Naive thymus-derived CD4-positive, alpha-beta T cell (primary cell): ENCODE measurements at regions of chr11 and their contacts with region 1.

Region 1: GRCh38 chr11:57657194-57658022 is at the start of gene CLP1:
- DNase-seq: peak; percentile 87 to 99 (median 98)
- ATAC-seq: peak; percentile 99
- H3K4me3 ChIP-seq: peak within 1 kb of the TSS; percentile 64
- H3K4me3 Mint-ChIP-seq: peak within 1 kb of the TSS; percentile 89 to 100 (median 94)
- H3K27ac ChIP-seq: peak within 1 kb of the TSS; percentile 92
- H3K27ac Mint-ChIP-seq: peak within 1 kb of the TSS; percentile 88 to 98 (median 94)
- H3K4me1 ChIP-seq: peaks cover 4 to 10% of the 10 kb centered on the region in 2 donors
- H3K4me1 Mint-ChIP-seq: peaks cover 8 to 45% (median 36%) of the 10 kb centered on the region in 7 donors
- H3K27me3 ChIP-seq: no peaks in the 10 kb centered on the region
- H3K27me3 Mint-ChIP-seq: no peaks in the 10 kb centered on the region
- total RNA-seq, gene CLP1: 12.8 to 18.5 (median 14.7) TPM

Region 2: GRCh38 chr11:57324886-57325734 is 332.3 kb before region 1 on chr11 and contains the start of gene TNKS1BP1:
- CTCF ChIA-PET with region 1: no interaction called
- POLR2A ChIA-PET with region 1: no interaction called
- intact Hi-C with region 1: loop called in 1 of 2 experiments (anchors 1 kb)
- DNase-seq: peak; percentile 84 to 92 (median 90)
- ATAC-seq: peak; percentile 91
- H3K4me3 ChIP-seq: peak within 1 kb of the TSS; percentile 73
- H3K4me3 Mint-ChIP-seq: peak within 1 kb of the TSS; percentile 88 to 95 (median 91)
- H3K27ac ChIP-seq: peak within 1 kb of the TSS; percentile 79
- H3K27ac Mint-ChIP-seq: peak within 1 kb of the TSS; percentile 93 to 98 (median 95)
- H3K4me1 ChIP-seq: peaks cover 8 to 14% of the 10 kb centered on the region in 2 donors
- H3K4me1 Mint-ChIP-seq: peaks cover 30 to 58% (median 51%) of the 10 kb centered on the region in 7 donors
- H3K27me3 ChIP-seq: no peaks in the 10 kb centered on the region
- H3K27me3 Mint-ChIP-seq: no peaks in the 10 kb centered on the region
- total RNA-seq, gene TNKS1BP1: 11.2 to 22.0 (median 15.9) TPM

Region 3: DNA sequence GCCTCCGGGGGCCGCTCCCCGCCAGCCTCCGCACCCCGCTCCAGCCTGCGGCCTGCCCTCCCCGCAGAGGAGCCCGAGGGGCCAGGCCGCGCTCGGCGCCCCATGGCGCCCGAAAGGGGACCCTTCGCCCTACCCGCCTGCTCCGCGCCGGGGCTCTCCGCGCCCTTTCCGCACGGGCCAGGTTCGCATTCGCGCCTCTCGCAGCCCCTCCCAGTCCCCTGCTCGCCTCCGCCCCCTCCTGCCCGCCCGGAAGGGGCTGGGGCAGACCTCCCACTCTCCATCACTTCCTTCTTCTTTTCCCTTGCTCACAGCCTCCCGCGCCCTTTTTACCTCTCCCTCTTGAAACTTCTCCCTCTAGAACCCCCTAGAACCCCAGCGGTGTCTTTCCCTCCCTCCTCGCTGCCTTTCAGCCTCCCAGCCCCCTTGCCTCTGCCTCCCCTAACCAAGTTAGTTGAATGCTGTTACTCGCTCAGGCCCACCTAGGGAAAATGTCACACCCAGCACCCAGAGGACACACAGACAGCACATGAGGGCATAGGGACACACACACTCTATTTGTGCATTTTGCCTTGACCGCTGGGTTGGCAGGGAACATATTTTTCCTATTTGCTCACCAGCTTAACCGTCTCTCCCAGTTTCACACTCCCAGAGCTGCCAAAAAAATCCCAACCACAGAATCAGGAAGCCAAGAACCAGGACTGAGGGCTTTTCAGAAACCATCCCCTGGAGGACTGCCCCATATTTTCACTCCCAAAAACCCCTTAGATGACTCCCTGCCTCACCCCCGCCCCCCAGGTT is 230.3 kb before region 1 on chr11 and contains the start of gene SLC43A3:
- CTCF ChIA-PET with region 1: no interaction called
- POLR2A ChIA-PET with region 1: no interaction called
- intact Hi-C with region 1: loop called in 1 of 2 experiments (anchors 5 kb)
- DNase-seq: peak; percentile 18 to 79 (median 38)
- ATAC-seq: peak; percentile 63
- H3K4me3 ChIP-seq: peak within 1 kb of the TSS; percentile 56
- H3K4me3 Mint-ChIP-seq: peak within 1 kb of the TSS; percentile 83 to 92 (median 89)
- H3K27ac ChIP-seq: peak within 1 kb of the TSS; percentile 62
- H3K27ac Mint-ChIP-seq: peak within 1 kb of the TSS; percentile 52 to 93 (median 82)
- H3K4me1 ChIP-seq: peaks cover 24 to 36% of the 10 kb centered on the region in 2 donors
- H3K4me1 Mint-ChIP-seq: peaks cover 40 to 55% (median 50%) of the 10 kb centered on the region in 7 donors
- H3K27me3 ChIP-seq: no peaks in the 10 kb centered on the region
- H3K27me3 Mint-ChIP-seq: peaks cover 0 to 24% (median 0%) of the 10 kb centered on the region in 5 donors
- total RNA-seq, gene SLC43A3: 10.5 to 67.9 (median 12.2) TPM

Region 4: GRCh38 chr11:57463671-57464538 is 193.5 kb before region 1 on chr11:
- CTCF ChIA-PET with region 1: no interaction called
- POLR2A ChIA-PET with region 1: no interaction called
- intact Hi-C with region 1: no loop called
- DNase-seq: no peak
- ATAC-seq: no peak
- H3K4me3 ChIP-seq: no peak overlapping the region
- H3K4me3 Mint-ChIP-seq: no peak overlapping the region
- H3K27ac ChIP-seq: no peak overlapping the region
- H3K27ac Mint-ChIP-seq: peak overlapping the region in 1 of 9 donors; percentile 36
- H3K4me1 ChIP-seq: peaks cover 12 to 13% of the 10 kb centered on the region in 2 donors
- H3K4me1 Mint-ChIP-seq: peaks cover 8 to 22% (median 17%) of the 10 kb centered on the region in 7 donors
- H3K27me3 ChIP-seq: peaks cover 7 to 8% of the 10 kb centered on the region in 2 donors
- H3K27me3 Mint-ChIP-seq: peaks cover 11 to 48% (median 16%) of the 10 kb centered on the region in 5 donors

Region 5: GRCh38 chr11:57630193-57630592 is 27.2 kb before region 1 on chr11:
- CTCF ChIA-PET with region 1: no interaction called
- POLR2A ChIA-PET with region 1: no interaction called
- intact Hi-C with region 1: no loop called
- DNase-seq: no peak
- ATAC-seq: no peak
- H3K4me3 ChIP-seq: no peak overlapping the region
- H3K4me3 Mint-ChIP-seq: no peak overlapping the region
- H3K27ac ChIP-seq: no peak overlapping the region
- H3K27ac Mint-ChIP-seq: no peak overlapping the region
- H3K4me1 ChIP-seq: no peaks in the 10 kb centered on the region
- H3K4me1 Mint-ChIP-seq: no peaks in the 10 kb centered on the region
- H3K27me3 ChIP-seq: no peaks in the 10 kb centered on the region
- H3K27me3 Mint-ChIP-seq: peaks cover 9 to 36% (median 24%) of the 10 kb centered on the region in 5 donors

Region 6: DNA sequence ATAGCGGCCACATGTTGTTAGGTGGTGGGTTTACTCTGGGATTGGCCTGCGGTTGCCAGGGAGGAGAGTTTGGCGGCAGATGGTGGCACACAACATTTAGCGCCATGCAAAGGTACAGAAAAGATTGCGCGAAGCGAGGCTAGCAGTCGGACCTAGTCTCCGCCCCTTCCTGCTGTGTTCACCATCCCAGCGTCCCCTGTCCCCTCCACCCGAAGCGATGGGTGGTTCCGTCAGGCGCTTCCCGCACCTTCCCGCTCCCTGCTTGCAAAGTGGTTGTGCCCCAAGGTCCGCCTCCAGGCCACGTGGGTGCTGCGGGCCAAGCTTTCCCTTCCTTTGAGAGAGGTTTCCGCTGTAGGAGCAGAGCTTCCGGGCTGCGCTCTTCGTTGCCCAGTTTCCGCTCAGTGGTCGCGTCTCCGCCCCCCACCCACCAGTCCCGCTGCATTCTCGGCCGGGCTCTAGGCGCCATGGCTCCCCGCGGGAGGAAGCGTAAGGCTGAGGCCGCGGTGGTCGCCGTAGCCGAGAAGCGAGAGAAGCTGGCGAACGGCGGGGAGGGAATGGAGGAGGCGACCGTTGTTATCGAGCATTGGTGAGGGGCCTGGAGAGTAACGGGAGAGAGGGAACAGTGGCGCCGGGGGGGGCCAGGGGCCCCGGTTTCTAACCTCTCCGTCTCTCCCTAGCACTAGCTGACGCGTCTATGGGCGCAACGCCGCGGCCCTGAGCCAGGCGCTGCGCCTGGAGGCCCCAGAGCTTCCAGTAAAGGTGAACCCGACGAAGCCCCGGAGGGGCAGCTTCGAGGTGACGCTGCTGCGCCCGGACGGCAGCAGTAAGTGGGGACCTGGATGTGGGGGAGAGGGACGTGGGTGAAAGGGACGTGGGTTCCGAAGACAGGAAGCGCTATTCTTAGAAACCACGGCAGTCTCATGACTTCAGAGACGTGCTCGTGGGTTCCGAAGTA is 84.0 kb after region 1 on chr11 and contains the start of gene SELENOH:
- CTCF ChIA-PET with region 1: no interaction called
- POLR2A ChIA-PET with region 1: interaction called, 3 read pairs
- intact Hi-C with region 1: loop called (anchors 1 kb)
- DNase-seq: peak; percentile 75 to 96 (median 91)
- ATAC-seq: peak; percentile 94
- H3K4me3 ChIP-seq: peak within 1 kb of the TSS; percentile 86
- H3K4me3 Mint-ChIP-seq: peak within 1 kb of the TSS; percentile 90 to 100 (median 99)
- H3K27ac ChIP-seq: peak within 1 kb of the TSS; percentile 93
- H3K27ac Mint-ChIP-seq: peak within 1 kb of the TSS; percentile 97 to 100 (median 98)
- H3K4me1 ChIP-seq: peaks cover 16 to 23% of the 10 kb centered on the region in 2 donors
- H3K4me1 Mint-ChIP-seq: peaks cover 12 to 50% (median 41%) of the 10 kb centered on the region in 7 donors
- H3K27me3 ChIP-seq: no peaks in the 10 kb centered on the region
- H3K27me3 Mint-ChIP-seq: no peaks in the 10 kb centered on the region
- total RNA-seq, gene SELENOH: 93.6 to 193 (median 124) TPM

Region 7: DNA sequence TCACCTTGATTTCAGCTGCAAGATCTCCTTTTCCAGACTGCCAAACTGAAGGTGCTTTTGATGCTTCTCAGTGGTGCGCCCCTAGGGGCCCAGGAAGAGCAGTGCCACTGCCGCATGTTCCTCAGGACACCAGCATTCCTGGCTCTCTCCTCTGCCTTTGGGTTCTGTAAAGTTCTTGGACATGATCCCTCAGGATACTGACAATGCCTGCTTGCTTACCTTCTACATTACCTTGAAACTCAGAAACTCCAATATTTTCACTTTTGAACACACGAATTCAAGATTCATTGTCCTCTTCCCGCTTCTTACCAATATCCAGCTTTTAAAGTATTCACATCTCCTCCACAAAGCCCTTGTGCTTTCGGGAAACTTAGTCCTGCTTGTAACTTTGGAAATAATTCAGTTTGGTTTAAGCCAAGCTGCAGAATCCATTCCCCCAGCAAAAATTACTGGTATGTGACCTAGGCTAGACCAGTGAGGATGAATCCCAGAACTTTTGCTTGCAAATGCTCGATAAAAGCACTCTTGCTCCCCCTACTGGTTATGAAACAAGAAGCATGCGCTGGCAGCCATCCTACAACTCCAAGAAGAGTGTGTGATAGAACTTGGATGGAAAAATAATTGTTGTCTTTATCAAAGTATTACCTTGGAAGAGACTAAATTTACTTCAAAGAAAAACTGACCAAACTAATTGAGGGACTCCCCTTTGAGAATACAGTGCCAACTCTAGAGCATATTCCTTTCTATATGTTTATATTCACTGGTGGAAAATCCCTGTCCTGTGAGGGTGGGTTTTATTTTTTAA is 867.0 kb after region 1 on chr11:
- CTCF ChIA-PET with region 1: no interaction called
- POLR2A ChIA-PET with region 1: no interaction called
- intact Hi-C with region 1: loop called in 1 of 2 experiments (anchors 1 kb)
- DNase-seq: peak in 8 of 9 donors; percentile 39 to 78 (median 70)
- ATAC-seq: peak; percentile 78
- H3K4me3 ChIP-seq: peak overlapping the region; percentile 10
- H3K4me3 Mint-ChIP-seq: peak overlapping the region; percentile 65 to 85 (median 80)
- H3K27ac ChIP-seq: peak overlapping the region; percentile 75
- H3K27ac Mint-ChIP-seq: peak overlapping the region; percentile 84 to 99 (median 97)
- H3K4me1 ChIP-seq: peaks cover 18 to 50% of the 10 kb centered on the region in 2 donors
- H3K4me1 Mint-ChIP-seq: peaks cover 27 to 90% (median 54%) of the 10 kb centered on the region in 7 donors
- H3K27me3 ChIP-seq: no peaks in the 10 kb centered on the region
- H3K27me3 Mint-ChIP-seq: no peaks in the 10 kb centered on the region